ENCODE measurements at regions of chr5 and their contacts with region 1.

Region 1: DNA sequence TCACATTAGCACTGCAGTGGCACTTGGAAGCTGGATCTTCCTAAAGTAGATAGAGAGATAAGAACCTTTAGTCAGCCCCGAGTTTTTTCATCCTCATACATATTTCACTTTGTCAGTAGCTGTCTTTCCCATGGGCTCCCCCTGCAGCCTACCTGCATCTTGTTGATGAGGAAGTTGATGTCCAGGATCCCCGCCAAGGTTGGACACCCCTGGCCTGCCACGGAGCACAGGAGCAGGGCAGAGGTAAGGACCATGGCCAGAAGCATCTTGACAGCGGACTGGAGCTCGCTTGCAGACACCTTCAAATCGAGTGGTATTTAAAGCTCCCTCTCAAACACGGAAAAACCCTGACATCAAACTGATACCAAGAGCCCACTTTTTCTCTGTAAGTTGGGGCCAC is at the start of gene IL9:
- DNase-seq: no peak
- H3K4me3 Mint-ChIP-seq: peak within 1 kb of the TSS; percentile 37
- H3K27ac Mint-ChIP-seq: no peak within 1 kb of the TSS
- H3K4me1 Mint-ChIP-seq: peaks cover 22% of the 10 kb centered on the region
- H3K27me3 Mint-ChIP-seq: peaks cover 62% of the 10 kb centered on the region
- total RNA-seq, gene IL9: 94.0 and 104 TPM in 2 replicates

Region 2: DNA sequence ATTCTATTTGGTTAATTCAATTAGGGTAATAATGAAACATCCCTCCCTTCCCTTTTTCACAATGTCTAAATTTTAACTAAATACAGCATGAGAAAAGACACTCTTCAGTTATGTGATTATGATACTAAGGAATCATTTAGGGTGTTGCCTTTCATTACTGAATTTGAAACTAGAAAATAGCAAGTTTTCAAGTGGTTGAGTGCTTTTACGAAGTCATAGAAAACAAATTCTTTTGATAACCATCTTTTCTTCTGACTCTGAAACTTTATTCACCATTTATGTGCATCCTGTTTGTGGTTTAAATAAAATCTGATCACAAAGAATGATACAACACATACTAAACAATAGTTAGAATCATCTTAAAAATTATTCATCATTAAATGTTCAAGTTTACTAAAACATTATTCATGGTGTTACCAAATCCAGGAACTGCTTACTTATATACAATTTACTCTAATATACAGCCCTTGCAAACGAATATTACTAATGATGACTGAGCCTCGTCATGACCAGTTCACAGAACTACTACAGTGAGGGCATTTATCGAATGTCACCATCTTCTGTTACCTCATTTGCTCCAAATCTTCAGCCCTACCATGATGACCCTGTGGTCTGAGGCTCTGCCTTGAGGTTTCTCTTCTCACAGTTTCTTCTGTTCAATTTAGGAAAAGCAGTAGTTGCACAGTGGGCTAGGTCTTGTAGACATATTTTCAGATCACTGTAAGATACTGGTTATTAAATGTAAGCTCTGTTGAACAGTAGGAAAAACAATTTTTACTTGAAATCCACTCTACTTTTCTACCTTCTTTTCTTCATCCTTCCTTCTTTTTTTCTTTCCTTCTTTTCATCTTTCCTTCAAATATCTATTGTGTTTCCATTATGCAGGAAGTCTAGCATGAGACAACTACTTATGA is 18.4 kb after region 1 on chr5:
- intact Hi-C with region 1: loop called (anchors 1 kb)
- DNase-seq: peak; percentile 14
- H3K4me3 Mint-ChIP-seq: no peak overlapping the region
- H3K27ac Mint-ChIP-seq: peak overlapping the region; percentile 33
- H3K4me1 Mint-ChIP-seq: peaks cover 36% of the 10 kb centered on the region
- H3K27me3 Mint-ChIP-seq: peaks cover 57% of the 10 kb centered on the region

Region 3: GRCh38 chr5:136037001-136037705 is 141.6 kb after region 1 on chr5:
- intact Hi-C with region 1: no loop called
- DNase-seq: peak; percentile 15
- H3K4me3 Mint-ChIP-seq: no peak overlapping the region
- H3K27ac Mint-ChIP-seq: peak overlapping the region; percentile 61
- H3K4me1 Mint-ChIP-seq: peaks cover 20% of the 10 kb centered on the region
- H3K27me3 Mint-ChIP-seq: peaks cover 8% of the 10 kb centered on the region

Region 4: GRCh38 chr5:136251502-136252169 is 356.1 kb after region 1 on chr5:
- intact Hi-C with region 1: no loop called
- DNase-seq: no peak
- H3K4me3 Mint-ChIP-seq: no peak overlapping the region
- H3K27ac Mint-ChIP-seq: no peak overlapping the region
- H3K4me1 Mint-ChIP-seq: no peaks in the 10 kb centered on the region
- H3K27me3 Mint-ChIP-seq: peaks cover 10% of the 10 kb centered on the region